ENCODE measurements at regions of chr1 and their contacts with region 1.

Region 1: GRCh38 chr1:111334169-111334568 is 43.5 kb downstream of the CHIA start:
- DNase-seq: peak in 9 of 10 donors; percentile 40 to 80 (median 60)
- ATAC-seq: peak; percentile 89 to 92
- H3K4me3 Mint-ChIP-seq: no peak overlapping the region
- H3K27ac Mint-ChIP-seq: peak overlapping the region in 2 of 10 donors; percentile 8 to 15
- H3K4me1 Mint-ChIP-seq: peaks cover 2 to 10% (median 5%) of the 10 kb centered on the region in 4 donors
- H3K27me3 Mint-ChIP-seq: no peaks in the 10 kb centered on the region

Region 2: GRCh38 chr1:111139956-111140679 is 194.1 kb before region 1 on chr1 and contains the starts of genes CEPT1 and DRAM2:
- POLR2A ChIA-PET with region 1: no interaction called
- DNase-seq: peak; percentile 86 to 94 (median 92)
- ATAC-seq: peak; percentile 69 to 73
- H3K4me3 Mint-ChIP-seq: peak within 1 kb of the TSS; percentile 91 to 100 (median 100)
- H3K27ac Mint-ChIP-seq: peak within 1 kb of the TSS; percentile 96 to 100 (median 98)
- H3K4me1 Mint-ChIP-seq: peaks cover 20 to 73% (median 53%) of the 10 kb centered on the region in 4 donors
- H3K27me3 Mint-ChIP-seq: no peaks in the 10 kb centered on the region
- polyA plus RNA-seq, gene CEPT1: 18.0 to 28.6 (median 27.2) TPM
- polyA plus RNA-seq, gene DRAM2: 84.3 to 95.3 (median 91.2) TPM

Region 3: GRCh38 chr1:111222308-111223125 is 111.7 kb before region 1 on chr1:
- POLR2A ChIA-PET with region 1: interaction called, 14 read pairs
- DNase-seq: peak; percentile 44 to 84 (median 68)
- ATAC-seq: peak; percentile 22
- H3K4me3 Mint-ChIP-seq: peak overlapping the region; percentile 68 to 95 (median 84)
- H3K27ac Mint-ChIP-seq: peak overlapping the region; percentile 87 to 99 (median 95)
- H3K4me1 Mint-ChIP-seq: peaks cover 58 to 99% (median 93%) of the 10 kb centered on the region in 4 donors
- H3K27me3 Mint-ChIP-seq: no peaks in the 10 kb centered on the region

Region 4: GRCh38 chr1:111302374-111302773 is 31.8 kb before region 1 on chr1:
- POLR2A ChIA-PET with region 1: no interaction called
- DNase-seq: no peak
- ATAC-seq: no peak
- H3K4me3 Mint-ChIP-seq: no peak overlapping the region
- H3K27ac Mint-ChIP-seq: no peak overlapping the region
- H3K4me1 Mint-ChIP-seq: peaks cover 0 to 3% (median 0%) of the 10 kb centered on the region in 4 donors
- H3K27me3 Mint-ChIP-seq: no peaks in the 10 kb centered on the region

Region 5: DNA sequence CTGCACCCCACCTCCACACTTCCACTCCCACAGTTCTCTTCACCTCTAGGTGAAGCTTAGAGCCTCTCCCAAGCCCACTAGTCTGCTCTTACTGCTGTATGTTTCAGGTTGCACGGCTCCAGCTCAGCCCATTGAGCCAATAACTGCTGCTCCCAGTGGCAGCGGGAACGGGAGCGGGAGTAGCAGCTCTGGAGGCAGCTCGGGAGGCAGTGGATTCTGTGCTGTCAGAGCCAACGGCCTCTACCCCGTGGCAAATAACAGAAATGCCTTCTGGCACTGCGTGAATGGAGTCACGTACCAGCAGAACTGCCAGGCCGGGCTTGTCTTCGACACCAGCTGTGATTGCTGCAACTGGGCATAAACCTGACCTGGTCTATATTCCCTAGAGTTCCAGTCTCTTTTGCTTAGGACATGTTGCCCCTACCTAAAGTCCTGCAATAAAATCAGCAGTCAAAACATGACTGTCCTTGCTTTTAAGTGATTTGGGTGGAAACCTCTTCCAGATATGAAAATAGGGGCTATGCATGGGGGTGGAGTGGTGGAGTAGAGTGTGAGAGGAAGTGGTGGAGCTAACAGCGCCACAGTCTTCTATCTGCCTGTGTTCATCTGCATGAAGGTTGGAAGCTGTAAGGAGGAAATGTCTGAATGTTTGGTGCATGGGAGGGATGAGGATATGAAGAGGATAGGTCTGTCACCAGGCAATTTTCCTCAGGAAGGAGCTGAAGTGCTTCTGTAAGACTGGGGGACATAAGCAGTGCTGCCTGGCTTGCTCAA is 13.9 kb before region 1 on chr1:
- POLR2A ChIA-PET with region 1: no interaction called
- DNase-seq: peak in 2 of 10 donors; percentile 26 to 43
- ATAC-seq: peak in 1 of 2 donors; percentile 70
- H3K4me3 Mint-ChIP-seq: peak overlapping the region in 6 of 10 donors; percentile 1 to 51 (median 20)
- H3K27ac Mint-ChIP-seq: peak overlapping the region in 6 of 10 donors; percentile 1 to 68 (median 26)
- H3K4me1 Mint-ChIP-seq: peaks cover 9 to 23% (median 16%) of the 10 kb centered on the region in 4 donors
- H3K27me3 Mint-ChIP-seq: peaks cover 0 to 3% (median 0%) of the 10 kb centered on the region in 5 donors